Tibial artery (tissue), 4 donors: ENCODE measurements at regions of chr5 and their contacts with region 1.

Region 1: GRCh38 chr5:159915904-159916840 is at the start of gene ADRA1B:
- DNase-seq: peak; percentile 70 to 89
- H3K4me3 ChIP-seq: peak within 1 kb of the TSS; percentile 57 to 74
- H3K27ac ChIP-seq: peak within 1 kb of the TSS; percentile 76 to 91
- H3K4me1 ChIP-seq: peaks cover 0 to 91% (median 51%) of the 10 kb centered on the region in 4 donors
- H3K27me3 ChIP-seq: no peaks in the 10 kb centered on the region
- CTCF ChIP-seq: peak; percentile 76 to 77

Region 2: GRCh38 chr5:159419576-159419975 is 496.6 kb before region 1 on chr5:
- intact Hi-C with region 1: no loop called
- DNase-seq: no peak
- H3K4me3 ChIP-seq: no peak overlapping the region
- H3K27ac ChIP-seq: no peak overlapping the region
- H3K4me1 ChIP-seq: no peaks in the 10 kb centered on the region
- H3K27me3 ChIP-seq: no peaks in the 10 kb centered on the region
- CTCF ChIP-seq: no peak

Region 3: GRCh38 chr5:159451197-159452052 is 464.7 kb before region 1 on chr5:
- intact Hi-C with region 1: loop called (anchors 5 kb)
- DNase-seq: peak; percentile 71 to 83
- H3K4me3 ChIP-seq: no peak overlapping the region
- H3K27ac ChIP-seq: peak overlapping the region; percentile 75 to 78
- H3K4me1 ChIP-seq: peaks cover 0 to 19% (median 9%) of the 10 kb centered on the region in 4 donors
- H3K27me3 ChIP-seq: no peaks in the 10 kb centered on the region
- CTCF ChIP-seq: no peak

Region 4: GRCh38 chr5:159515909-159516415 is 400.2 kb before region 1 on chr5:
- intact Hi-C with region 1: loop called (anchors 5 kb)
- DNase-seq: peak; percentile 45 to 84
- H3K4me3 ChIP-seq: no peak overlapping the region
- H3K27ac ChIP-seq: no peak overlapping the region
- H3K4me1 ChIP-seq: peaks cover 0 to 24% (median 19%) of the 10 kb centered on the region in 4 donors
- H3K27me3 ChIP-seq: no peaks in the 10 kb centered on the region
- CTCF ChIP-seq: peak; percentile 57 to 70

Region 5: GRCh38 chr5:159786901-159787691 is 129.1 kb before region 1 on chr5:
- intact Hi-C with region 1: loop called (anchors 5 kb)
- DNase-seq: peak; percentile 88 to 91
- H3K4me3 ChIP-seq: no peak overlapping the region
- H3K27ac ChIP-seq: peak overlapping the region; percentile 88 to 95
- H3K4me1 ChIP-seq: peaks cover 0 to 80% (median 43%) of the 10 kb centered on the region in 4 donors
- H3K27me3 ChIP-seq: no peaks in the 10 kb centered on the region
- CTCF ChIP-seq: no peak

Region 6: DNA sequence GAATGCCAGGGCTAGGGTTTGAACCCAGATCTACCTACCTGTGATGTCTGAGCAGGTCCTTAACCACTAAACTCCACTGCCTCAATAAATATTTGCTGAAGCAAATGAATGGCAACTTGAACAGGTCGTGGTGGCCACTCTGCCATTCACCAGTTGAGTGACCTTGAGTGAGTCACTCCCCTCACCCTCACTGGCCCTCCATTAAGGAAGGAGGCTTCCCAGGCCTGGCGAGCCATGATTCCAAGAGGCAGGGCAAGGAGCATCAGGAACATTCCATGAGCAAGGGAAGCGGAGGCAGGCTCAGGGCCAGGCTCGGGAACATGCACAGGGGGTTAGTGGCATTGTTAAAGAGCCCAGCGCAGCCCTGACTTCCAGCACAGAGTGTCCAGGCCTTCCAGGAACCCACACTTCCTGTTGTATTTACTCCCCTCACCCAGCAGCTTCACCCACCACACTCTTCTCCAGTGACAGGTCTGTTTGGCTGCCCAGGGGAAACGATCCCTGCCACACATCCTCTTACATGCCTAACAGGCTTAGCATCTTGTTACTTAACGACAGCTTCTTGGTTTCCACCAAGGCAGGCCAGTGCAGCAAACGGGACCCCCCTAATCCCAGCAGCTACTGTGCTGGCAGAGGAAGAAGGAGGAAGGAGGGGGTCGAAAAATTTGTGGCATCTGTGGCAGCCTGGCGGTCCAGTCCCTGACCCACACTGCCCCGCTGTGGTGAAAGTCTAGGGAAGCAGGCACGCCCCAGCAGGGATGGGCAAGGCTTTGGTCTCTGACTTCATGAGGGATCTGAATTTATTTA is 49.1 kb after region 1 on chr5:
- intact Hi-C with region 1: loop called (anchors 10 kb)
- DNase-seq: peak in 1 of 2 donors; percentile 38
- H3K4me3 ChIP-seq: no peak overlapping the region
- H3K27ac ChIP-seq: no peak overlapping the region
- H3K4me1 ChIP-seq: peaks cover 0 to 30% (median 9%) of the 10 kb centered on the region in 4 donors
- H3K27me3 ChIP-seq: no peaks in the 10 kb centered on the region
- CTCF ChIP-seq: peak; percentile 59 to 71

Region 7: DNA sequence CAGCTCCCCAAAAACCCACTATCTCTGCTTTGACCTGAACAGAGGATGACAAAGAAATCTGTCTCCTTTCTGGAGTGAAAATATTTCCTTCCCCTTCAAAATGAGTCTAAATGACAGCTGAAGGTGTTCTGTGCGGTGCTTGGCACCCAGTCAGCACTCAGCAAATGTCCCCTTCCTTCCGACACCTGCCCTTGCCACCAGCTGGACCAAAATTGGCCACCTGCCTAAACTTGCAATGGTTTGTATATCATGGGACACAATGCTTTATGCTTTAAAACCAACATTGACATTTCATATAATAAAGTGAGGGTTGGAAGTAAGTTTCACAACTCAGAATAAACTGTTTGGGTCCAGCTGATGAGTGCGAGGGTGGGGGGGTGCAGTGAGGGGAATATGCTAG is 85.3 kb after region 1 on chr5:
- intact Hi-C with region 1: no loop called
- DNase-seq: no peak
- H3K4me3 ChIP-seq: no peak overlapping the region
- H3K27ac ChIP-seq: no peak overlapping the region
- H3K4me1 ChIP-seq: no peaks in the 10 kb centered on the region
- H3K27me3 ChIP-seq: no peaks in the 10 kb centered on the region
- CTCF ChIP-seq: no peak

Region 8: DNA sequence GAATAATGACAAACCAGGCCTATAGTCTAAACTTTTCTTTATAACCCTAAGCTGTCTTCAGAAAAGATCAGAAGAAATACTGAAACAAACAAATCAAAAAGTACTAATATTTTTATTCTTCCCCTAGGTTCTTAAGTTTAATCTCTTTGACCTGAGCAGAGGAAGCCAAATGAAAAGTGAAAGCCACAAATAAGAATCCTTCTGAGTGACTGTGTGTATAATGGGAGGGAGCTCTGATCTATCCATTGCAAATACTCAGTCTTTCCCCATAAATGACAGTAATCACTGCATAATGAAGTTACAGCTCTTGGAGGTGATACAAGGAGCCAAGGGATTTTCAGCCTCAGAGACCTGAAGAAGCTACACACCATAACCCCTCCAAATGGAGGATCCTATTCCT is 1062.8 kb after region 1 on chr5:
- intact Hi-C with region 1: no loop called
- DNase-seq: no peak
- H3K4me3 ChIP-seq: no peak overlapping the region
- H3K27ac ChIP-seq: no peak overlapping the region
- H3K4me1 ChIP-seq: no peaks in the 10 kb centered on the region
- H3K27me3 ChIP-seq: peaks cover 0 to 4% of the 10 kb centered on the region in 2 donors
- CTCF ChIP-seq: no peak